T-cell (primary cell): ENCODE measurements at regions of chr13 and their contacts with region 1.

Region 1: DNA sequence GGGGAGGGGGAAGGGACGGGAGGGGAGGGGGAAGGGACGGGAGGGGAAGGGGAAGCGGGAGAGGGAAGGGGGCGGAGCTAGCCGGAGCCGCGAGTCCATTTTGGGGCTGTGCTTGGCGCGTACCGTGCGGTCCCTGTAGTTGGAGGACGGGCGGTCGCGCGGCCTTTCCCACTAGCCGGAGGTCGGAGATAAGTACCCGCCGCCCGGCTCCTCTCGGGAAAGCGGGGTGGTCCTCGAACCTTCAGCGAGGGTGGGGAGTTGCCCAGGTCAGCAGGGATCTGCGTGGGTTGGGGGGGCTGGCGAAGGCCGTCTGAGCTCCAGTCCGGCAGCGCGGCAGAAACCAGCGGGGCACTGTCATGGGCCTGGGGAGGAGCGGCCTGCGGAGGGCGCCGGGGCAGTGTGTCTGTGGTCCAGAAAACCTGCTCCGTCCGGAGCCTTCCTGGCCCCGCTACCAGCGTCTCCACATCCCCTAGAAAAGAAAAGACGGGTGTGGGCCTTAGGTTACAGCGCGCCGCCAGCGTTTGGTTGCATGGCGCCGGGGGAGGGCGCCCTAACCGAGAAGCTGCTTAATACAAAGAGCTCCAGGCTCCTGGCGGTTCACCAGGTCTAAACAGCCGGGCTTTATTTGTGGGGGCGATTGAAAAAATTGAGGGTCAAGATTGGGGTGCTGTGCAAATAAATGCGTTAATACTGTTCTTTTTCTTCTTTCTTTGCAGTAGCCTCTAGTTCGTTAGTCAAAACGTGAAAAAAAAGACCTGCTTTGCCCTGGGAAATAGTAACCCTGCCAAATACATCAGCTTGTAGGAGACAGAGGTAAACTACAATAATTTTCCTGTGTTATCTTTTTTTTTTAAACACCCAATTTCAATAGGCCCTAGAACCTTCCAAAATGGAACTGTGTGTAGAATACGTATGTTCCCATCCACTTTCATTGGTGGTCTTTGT is at the start of gene TRIM13:
- DNase-seq: peak; percentile 66 to 89 (median 79)
- ATAC-seq: peak; percentile 83 to 85 (median 84)
- H3K4me3 ChIP-seq: peak within 1 kb of the TSS; percentile 81 to 98
- H3K4me3 Mint-ChIP-seq: peak within 1 kb of the TSS; percentile 85 to 86 (median 85)
- H3K27ac ChIP-seq: peak within 1 kb of the TSS; percentile 83
- H3K27ac Mint-ChIP-seq: peak within 1 kb of the TSS; percentile 85 to 87
- H3K4me1 ChIP-seq: peaks cover 26 to 34% of the 10 kb centered on the region in 2 experiments
- H3K4me1 Mint-ChIP-seq: peaks cover 39 to 54% (median 53%) of the 10 kb centered on the region in 3 donors
- H3K27me3 ChIP-seq: no peaks in the 10 kb centered on the region
- H3K27me3 Mint-ChIP-seq: no peaks in the 10 kb centered on the region
- total RNA-seq, gene TRIM13: 20.5 to 27.8 (median 23.4) TPM

Region 2: GRCh38 chr13:49936085-49936940 is 60.9 kb before region 1 on chr13 and contains the start of gene SPRYD7:
- CTCF ChIA-PET with region 1: interaction called in 1 of 2 experiments, 16 read pairs
- POLR2A ChIA-PET with region 1: interaction called in 1 of 2 experiments, 10 read pairs
- DNase-seq: peak; percentile 75 to 96 (median 87)
- ATAC-seq: peak; percentile 84 to 89 (median 88)
- H3K4me3 ChIP-seq: peak within 1 kb of the TSS; percentile 91 to 97
- H3K4me3 Mint-ChIP-seq: peak within 1 kb of the TSS; percentile 85 to 95 (median 90)
- H3K27ac ChIP-seq: peak within 1 kb of the TSS; percentile 39
- H3K27ac Mint-ChIP-seq: peak within 1 kb of the TSS; percentile 72 to 88
- H3K4me1 ChIP-seq: peaks cover 5 to 14% of the 10 kb centered on the region in 2 experiments
- H3K4me1 Mint-ChIP-seq: peaks cover 13 to 25% (median 22%) of the 10 kb centered on the region in 3 donors
- H3K27me3 ChIP-seq: peaks cover 0 to 11% of the 10 kb centered on the region in 2 experiments
- H3K27me3 Mint-ChIP-seq: no peaks in the 10 kb centered on the region
- total RNA-seq, gene SPRYD7: 1.6 to 4.7 (median 3.2) TPM

Region 3: DNA sequence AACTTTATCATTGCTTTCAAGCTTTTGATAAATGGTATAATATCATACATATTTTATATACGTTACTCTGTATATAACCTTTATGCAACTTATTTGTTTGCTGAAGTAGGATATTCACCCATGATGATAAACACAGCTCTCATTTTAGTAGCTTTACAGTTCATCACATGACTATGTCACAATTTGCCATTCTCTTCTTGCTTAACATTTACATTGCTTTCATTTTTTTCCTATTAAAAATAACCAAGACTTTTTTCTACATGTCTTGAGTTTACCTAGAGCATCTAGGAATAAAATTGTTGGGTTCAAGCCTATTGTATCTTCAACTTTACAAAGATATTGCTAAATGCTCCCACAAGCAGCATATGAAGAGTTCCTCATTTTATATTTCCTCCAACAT is 72.0 kb after region 1 on chr13:
- CTCF ChIA-PET with region 1: interaction called in 1 of 2 experiments, 14 read pairs
- POLR2A ChIA-PET with region 1: no interaction called
- DNase-seq: no peak
- ATAC-seq: no peak
- H3K4me3 ChIP-seq: no peak overlapping the region
- H3K4me3 Mint-ChIP-seq: no peak overlapping the region
- H3K27ac ChIP-seq: no peak overlapping the region
- H3K27ac Mint-ChIP-seq: no peak overlapping the region
- H3K4me1 ChIP-seq: peaks cover 3 to 8% of the 10 kb centered on the region in 2 experiments
- H3K4me1 Mint-ChIP-seq: peaks cover 13 to 41% (median 19%) of the 10 kb centered on the region in 3 donors
- H3K27me3 ChIP-seq: no peaks in the 10 kb centered on the region
- H3K27me3 Mint-ChIP-seq: peaks cover 0 to 2% of the 10 kb centered on the region in 2 donors

Region 4: GRCh38 chr13:50081679-50082425 is 84.6 kb after region 1 on chr13:
- CTCF ChIA-PET with region 1: interaction called, 6 to 57 read pairs
- POLR2A ChIA-PET with region 1: interaction called, 3 to 7 read pairs
- DNase-seq: peak; percentile 93 to 99 (median 97)
- ATAC-seq: peak; percentile 76 to 79 (median 77)
- H3K4me3 ChIP-seq: peak overlapping the region; percentile 87 to 96
- H3K4me3 Mint-ChIP-seq: peak overlapping the region; percentile 94 to 99 (median 96)
- H3K27ac ChIP-seq: peak overlapping the region; percentile 85
- H3K27ac Mint-ChIP-seq: peak overlapping the region; percentile 95 to 96
- H3K4me1 ChIP-seq: peaks cover 31 to 37% of the 10 kb centered on the region in 2 experiments
- H3K4me1 Mint-ChIP-seq: peaks cover 38 to 66% (median 61%) of the 10 kb centered on the region in 3 donors
- H3K27me3 ChIP-seq: peaks cover 0 to 10% of the 10 kb centered on the region in 2 experiments
- H3K27me3 Mint-ChIP-seq: peaks cover 0 to 9% of the 10 kb centered on the region in 2 donors